Activated CD4-positive, alpha-beta T cell treated with anti-CD3 and anti-CD28 coated beads for 36 hours (primary cell): ENCODE measurements at regions of chr10 and their contacts with region 1.

Region 1: DNA sequence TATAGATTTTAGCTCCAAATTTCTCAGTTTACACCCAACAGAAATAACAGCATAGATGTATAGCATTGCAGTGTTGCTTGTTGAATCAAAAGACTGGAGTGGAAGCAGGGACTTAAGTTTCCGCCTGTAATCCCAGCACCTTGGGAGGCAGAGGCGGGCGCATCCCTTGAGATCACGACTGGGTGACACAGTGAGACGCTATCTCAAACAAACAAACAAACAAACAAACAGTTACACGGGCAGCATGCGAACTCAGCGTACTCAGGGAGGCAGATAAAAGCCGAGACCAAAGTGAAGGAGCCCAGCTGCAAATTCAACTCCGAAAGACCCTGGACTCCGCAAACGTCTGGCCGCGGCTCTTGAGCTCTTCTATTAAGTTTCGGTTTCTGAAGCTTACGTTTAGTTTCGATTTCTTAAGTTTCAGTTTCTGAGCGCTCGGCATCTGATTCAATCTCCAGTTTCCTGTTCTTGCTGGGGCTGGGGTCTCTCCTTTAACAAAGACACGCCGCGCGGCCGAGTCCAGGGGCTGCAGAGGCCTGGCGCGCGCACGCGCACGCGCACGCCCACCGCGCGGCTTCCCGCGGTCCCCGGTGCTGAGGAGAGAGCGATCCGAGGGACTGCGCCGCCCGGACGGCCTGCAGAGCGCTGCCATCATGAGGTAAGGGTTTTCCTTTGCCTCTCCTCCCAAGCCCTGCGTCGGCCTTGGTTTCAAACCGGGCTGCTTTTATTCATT is at the start of gene IFIT5:
- DNase-seq: peak; percentile 76
- ATAC-seq: peak; percentile 74
- H3K4me3 Mint-ChIP-seq: peak within 1 kb of the TSS; percentile 81
- H3K27ac Mint-ChIP-seq: peak within 1 kb of the TSS; percentile 98
- H3K4me1 Mint-ChIP-seq: peaks cover 41% of the 10 kb centered on the region
- H3K27me3 Mint-ChIP-seq: no peaks in the 10 kb centered on the region
- total RNA-seq, gene IFIT5: 14.4 to 14.9 TPM

Region 2: DNA sequence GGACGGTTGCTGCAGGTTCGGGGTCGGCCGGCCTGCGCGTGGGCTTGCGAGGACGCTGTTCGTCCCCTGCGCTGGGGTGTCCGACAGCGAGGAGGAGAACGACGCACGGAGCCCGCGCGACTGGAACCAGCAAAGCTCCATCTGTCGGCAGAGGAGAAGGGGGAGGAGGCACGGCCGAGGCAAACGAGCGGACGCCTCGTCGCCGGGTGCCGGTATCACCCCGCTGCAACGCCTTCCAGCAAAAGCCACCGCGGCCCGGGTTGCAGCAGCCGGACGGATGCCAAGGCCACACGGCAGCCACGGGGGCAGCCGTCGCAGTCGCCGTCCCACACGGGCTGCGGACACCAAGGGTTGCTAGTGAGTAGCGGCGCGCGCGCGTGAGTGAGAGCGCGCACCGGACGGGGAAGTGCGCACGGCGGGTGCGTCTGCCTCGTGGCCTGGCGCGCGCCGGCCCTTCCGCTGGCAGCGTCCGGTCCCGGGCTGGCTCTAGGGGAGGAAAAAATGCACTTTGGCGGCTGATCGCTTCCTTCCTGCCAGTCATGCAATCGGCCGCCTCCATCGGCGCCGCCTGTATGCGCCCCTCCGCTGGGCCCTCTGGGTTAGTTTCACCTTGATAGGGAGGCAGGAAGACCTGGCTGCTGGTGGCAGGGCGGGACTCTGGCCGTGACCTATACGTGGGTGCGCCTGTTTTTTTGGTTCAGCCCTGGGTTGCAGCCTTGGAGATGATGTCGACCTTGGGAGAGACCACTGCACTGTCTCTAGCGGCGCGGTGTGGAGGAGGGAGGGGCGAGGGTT is 533.8 kb before region 1 on chr10:
- CTCF ChIA-PET with region 1: no interaction called
- POLR2A ChIA-PET with region 1: no interaction called
- intact Hi-C with region 1: loop called in 1 of 2 experiments (anchors 10 kb)
- DNase-seq: peak; percentile 87
- ATAC-seq: peak; percentile 81
- H3K4me3 Mint-ChIP-seq: peak overlapping the region; percentile 97
- H3K27ac Mint-ChIP-seq: peak overlapping the region; percentile 98
- H3K4me1 Mint-ChIP-seq: peaks cover 65% of the 10 kb centered on the region
- H3K27me3 Mint-ChIP-seq: no peaks in the 10 kb centered on the region

Region 3: DNA sequence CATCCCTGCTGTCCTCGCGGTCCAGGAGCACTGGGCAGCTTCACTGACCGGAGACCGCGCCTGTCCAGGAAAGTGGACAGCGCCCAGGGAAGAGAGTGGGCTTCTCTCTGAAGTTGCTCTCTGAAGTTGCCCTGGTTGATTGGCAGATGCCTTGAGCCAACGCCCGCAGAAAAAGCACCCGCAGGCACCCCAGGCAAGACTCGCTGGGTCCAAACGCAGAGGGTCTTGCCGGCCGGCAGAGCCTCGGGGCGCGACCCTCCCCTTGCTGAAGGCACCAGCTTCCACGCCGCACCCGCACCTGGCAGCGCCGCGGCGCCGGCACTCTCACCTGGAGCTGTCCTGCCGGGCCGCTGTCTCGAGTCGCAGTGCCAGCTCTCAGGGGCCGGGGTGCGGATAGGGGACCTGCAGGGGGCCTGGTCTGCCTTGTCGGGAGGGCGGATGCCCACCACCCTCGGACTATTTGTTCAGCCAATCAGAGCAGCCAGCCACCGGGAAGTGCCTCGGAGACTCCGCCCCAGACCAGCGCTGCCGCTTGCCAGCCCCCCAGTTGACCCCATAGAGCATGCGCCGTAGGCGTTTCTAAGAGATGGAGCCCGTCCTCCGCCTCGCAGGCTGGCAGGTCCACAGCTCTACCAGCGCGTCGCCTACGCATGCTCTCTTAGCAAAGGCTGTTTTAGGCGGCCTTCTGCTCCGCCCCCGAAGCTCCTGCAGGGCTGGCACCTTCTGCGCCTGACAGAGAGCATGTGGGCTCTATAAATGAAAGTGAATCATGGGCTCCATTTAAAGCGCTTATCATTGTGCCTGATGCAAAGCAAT is 162.7 kb before region 1 on chr10 and contains the start of gene LIPA:
- CTCF ChIA-PET with region 1: interaction called, 3 read pairs
- POLR2A ChIA-PET with region 1: no interaction called
- intact Hi-C with region 1: loop called in 1 of 2 experiments (anchors 1 kb)
- DNase-seq: peak; percentile 96
- ATAC-seq: peak; percentile 96
- H3K4me3 Mint-ChIP-seq: peak within 1 kb of the TSS; percentile 80
- H3K27ac Mint-ChIP-seq: peak within 1 kb of the TSS; percentile 74
- H3K4me1 Mint-ChIP-seq: peaks cover 47% of the 10 kb centered on the region
- H3K27me3 Mint-ChIP-seq: peaks cover 2% of the 10 kb centered on the region
- total RNA-seq, gene LIPA: 17.0 to 22.1 TPM

Region 4: DNA sequence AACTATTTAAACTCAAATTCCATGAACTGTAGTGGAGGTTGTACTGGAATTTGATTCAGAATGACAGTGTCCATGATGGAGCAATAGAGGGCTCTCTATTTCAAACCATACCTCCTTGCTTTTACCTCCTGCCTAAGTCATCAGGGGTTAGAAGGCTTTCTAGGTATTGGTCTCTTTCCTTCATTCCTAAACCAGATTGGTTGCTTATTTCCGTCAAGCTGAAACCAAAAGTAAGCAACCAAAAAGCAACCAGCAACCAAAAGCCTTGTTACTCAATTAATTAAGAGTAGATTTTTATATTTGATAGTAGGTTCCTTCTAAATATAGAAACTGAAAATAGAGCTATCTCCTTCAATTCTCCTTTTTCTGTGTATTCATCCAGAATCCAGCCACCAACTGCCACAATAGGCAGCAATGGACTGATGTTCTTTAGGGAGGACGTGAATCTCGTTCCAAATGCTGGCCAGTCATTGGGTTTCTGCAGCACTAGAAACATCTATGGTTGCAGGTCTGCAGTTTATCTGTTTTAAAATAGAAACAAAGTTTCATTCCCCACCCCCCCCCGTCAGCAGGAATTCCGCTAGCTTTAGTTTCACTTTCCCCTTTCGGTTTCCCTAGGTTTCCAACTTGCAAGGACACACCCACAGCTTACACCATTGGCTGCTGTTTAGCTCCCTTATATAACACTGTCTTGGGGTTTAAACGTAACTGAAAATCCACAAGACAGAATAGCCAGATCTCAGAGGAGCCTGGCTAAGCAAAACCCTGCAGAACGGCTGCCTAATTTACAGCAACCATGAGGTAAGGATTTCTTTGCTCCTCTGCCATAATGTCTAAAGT is 22.2 kb before region 1 on chr10 and contains the start of gene IFIT1:
- CTCF ChIA-PET with region 1: interaction called, 11 read pairs
- POLR2A ChIA-PET with region 1: interaction called, 3 read pairs
- intact Hi-C with region 1: loop called (anchors 1 to 2 kb)
- DNase-seq: peak; percentile 53
- ATAC-seq: peak; percentile 87
- H3K4me3 Mint-ChIP-seq: peak within 1 kb of the TSS; percentile 72
- H3K27ac Mint-ChIP-seq: peak within 1 kb of the TSS; percentile 79
- H3K4me1 Mint-ChIP-seq: peaks cover 27% of the 10 kb centered on the region
- H3K27me3 Mint-ChIP-seq: no peaks in the 10 kb centered on the region
- total RNA-seq, gene IFIT1: 5.9 to 6.5 TPM

Region 5: DNA sequence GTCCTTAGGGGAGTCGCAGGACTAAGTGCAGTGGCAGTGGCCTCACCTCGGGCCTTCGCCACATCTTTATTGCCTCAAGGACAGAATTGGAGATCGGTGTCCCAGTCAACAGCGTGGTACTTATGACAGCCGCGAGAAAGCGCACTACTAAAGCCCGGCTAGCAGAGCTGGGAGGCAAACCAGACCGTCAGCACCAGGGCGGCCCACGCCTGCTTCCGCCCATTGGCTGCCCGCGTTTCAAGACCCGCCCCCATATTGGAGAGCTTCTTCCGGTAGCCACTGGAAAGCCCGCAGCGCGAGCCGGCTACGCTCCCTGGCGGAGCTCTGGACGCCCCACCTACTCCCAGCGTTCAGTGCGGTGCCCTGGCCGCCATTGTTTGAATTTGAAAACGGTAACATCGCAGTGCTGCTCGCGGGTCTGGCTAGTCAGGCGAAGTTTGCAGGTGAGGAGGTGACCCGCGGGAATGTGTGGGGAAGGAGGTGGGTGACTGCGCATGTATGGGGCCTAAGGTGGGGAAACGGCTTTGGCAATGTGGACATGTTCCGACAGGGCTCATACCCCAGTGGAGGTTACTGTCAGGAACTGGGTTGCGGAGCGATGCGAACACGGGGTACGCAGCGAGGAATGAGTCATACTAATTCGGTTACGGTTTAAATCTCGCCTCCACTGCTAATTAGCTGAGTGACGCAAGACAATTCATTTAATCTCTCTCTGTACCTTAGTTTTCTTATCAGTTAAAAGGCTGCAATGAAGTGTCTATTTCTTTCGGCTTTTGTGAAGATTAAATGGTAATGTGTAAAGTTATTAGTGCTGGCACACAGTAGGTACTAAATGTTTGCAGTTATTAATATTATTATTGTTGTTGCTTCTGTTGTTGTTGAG is 287.2 kb after region 1 on chr10 and contains the start of gene KIF20B:
- CTCF ChIA-PET with region 1: no interaction called
- POLR2A ChIA-PET with region 1: no interaction called
- intact Hi-C with region 1: loop called (anchors 2 to 5 kb)
- DNase-seq: peak; percentile 97
- ATAC-seq: peak; percentile 97
- H3K4me3 Mint-ChIP-seq: peak within 1 kb of the TSS; percentile 99
- H3K27ac Mint-ChIP-seq: peak within 1 kb of the TSS; percentile 98
- H3K4me1 Mint-ChIP-seq: peaks cover 41% of the 10 kb centered on the region
- H3K27me3 Mint-ChIP-seq: no peaks in the 10 kb centered on the region
- total RNA-seq, gene KIF20B: 74.6 to 86.2 TPM

Region 6: DNA sequence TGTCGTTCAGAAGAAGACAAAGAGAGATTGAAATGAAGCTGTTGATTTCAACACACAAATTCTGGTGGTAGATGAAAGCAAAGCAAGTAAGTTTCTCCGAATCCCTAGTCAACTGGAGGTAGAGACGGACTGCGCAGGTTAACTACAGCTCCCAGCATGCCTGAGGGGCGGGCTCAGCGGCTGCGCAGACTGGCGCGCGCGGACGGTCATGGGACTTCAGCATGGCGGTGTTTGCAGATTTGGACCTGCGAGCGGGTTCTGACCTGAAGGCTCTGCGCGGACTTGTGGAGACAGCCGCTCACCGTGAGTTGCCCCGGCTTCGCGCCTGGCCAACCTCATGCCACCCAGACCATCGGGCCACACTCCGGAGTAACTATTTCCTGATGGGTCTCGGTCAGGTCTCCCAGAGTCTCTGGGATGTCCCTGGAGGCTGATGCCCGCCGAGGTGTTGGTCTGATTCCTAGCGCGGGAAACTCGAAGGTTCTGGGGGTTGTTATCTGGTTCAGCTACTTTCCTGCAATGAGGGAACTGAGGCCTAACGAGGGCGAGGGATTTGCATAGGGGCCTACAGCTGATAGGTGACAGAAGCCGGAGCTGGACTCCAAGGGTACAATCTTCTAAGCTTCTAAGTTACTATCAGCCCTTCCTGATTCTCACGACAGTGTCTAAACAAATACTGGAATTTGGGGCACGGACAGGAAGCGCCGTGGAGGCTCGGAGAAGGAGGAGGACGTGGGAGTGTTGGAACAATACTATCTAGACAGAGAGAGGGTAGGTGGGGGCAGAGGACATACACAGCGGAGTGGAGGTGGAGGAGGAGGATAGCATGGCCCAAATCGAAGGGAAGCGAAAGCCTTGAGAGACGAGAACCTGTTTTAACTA is 1457.7 kb after region 1 on chr10 and contains the start of gene RPP30:
- CTCF ChIA-PET with region 1: no interaction called
- POLR2A ChIA-PET with region 1: no interaction called
- intact Hi-C with region 1: loop called in 1 of 2 experiments (anchors 10 kb)
- DNase-seq: peak; percentile 92
- ATAC-seq: peak; percentile 93
- H3K4me3 Mint-ChIP-seq: peak within 1 kb of the TSS; percentile 89
- H3K27ac Mint-ChIP-seq: peak within 1 kb of the TSS; percentile 98
- H3K4me1 Mint-ChIP-seq: peaks cover 34% of the 10 kb centered on the region
- H3K27me3 Mint-ChIP-seq: peaks cover 17% of the 10 kb centered on the region
- total RNA-seq, gene RPP30: 103 to 115 TPM